Activated CD8-positive, alpha-beta memory T cell treated with anti-CD3 and anti-CD28 coated beads, Interleukin-2, amount 10 ng/mL, durations not matched to agents 7 days and 5 days (primary cell): ENCODE measurements at regions of chr12 and their contacts with region 1.

Region 1: DNA sequence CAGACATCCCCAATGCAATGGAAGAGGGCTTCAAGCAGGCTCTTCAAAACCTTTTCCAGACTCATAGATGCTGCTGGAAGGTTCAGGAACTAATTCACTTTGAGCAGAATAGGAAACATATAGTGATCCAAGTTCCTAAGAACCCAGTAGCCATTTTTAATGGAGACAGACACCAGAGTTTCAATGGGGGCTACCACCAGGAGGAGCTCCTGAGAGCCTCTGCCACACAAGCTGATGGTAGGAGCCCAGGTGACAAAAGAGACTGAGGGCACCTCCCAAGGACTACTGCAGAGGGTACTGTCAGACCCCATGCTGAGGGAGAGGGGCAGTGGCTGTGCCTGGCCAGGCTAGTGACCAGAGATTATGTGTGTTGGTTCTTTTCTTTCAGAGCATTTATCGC is 45.9 kb downstream of the IFNG start:
- DNase-seq: peak; percentile 72
- ATAC-seq: peak; percentile 54
- H3K4me3 Mint-ChIP-seq: no peak overlapping the region
- H3K27ac Mint-ChIP-seq: no peak overlapping the region
- H3K4me1 Mint-ChIP-seq: peaks cover 49% of the 10 kb centered on the region
- H3K27me3 Mint-ChIP-seq: no peaks in the 10 kb centered on the region

Region 2: DNA sequence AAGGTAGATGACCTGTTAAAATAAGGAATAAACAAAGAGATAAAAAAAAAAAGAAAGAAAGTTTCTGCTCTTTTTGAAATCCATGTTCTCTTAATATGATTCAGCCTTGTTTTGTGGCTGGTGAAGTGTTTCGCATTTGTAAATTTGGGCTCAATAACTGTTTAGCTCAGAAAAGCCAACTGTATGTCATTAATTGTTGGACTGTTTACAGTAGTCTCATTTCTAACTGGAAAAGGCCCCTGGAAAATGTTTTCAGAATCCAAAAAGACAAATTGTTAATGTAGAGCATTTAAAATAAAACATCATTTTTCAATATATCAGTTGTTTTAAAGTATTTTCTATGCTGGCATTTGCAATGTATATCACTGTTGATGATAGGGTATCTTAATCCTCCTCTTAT is 512.5 kb before region 1 on chr12:
- CTCF ChIA-PET with region 1: no interaction called
- DNase-seq: no peak
- ATAC-seq: no peak
- H3K4me3 Mint-ChIP-seq: no peak overlapping the region
- H3K27ac Mint-ChIP-seq: no peak overlapping the region
- H3K4me1 Mint-ChIP-seq: no peaks in the 10 kb centered on the region
- H3K27me3 Mint-ChIP-seq: no peaks in the 10 kb centered on the region

Region 3: GRCh38 chr12:68078737-68079136 is 34.9 kb before region 1 on chr12:
- CTCF ChIA-PET with region 1: interaction called, 12 read pairs
- DNase-seq: no peak
- ATAC-seq: no peak
- H3K4me3 Mint-ChIP-seq: no peak overlapping the region
- H3K27ac Mint-ChIP-seq: peak overlapping the region; percentile 62
- H3K4me1 Mint-ChIP-seq: peaks cover 48% of the 10 kb centered on the region
- H3K27me3 Mint-ChIP-seq: no peaks in the 10 kb centered on the region

Region 4: DNA sequence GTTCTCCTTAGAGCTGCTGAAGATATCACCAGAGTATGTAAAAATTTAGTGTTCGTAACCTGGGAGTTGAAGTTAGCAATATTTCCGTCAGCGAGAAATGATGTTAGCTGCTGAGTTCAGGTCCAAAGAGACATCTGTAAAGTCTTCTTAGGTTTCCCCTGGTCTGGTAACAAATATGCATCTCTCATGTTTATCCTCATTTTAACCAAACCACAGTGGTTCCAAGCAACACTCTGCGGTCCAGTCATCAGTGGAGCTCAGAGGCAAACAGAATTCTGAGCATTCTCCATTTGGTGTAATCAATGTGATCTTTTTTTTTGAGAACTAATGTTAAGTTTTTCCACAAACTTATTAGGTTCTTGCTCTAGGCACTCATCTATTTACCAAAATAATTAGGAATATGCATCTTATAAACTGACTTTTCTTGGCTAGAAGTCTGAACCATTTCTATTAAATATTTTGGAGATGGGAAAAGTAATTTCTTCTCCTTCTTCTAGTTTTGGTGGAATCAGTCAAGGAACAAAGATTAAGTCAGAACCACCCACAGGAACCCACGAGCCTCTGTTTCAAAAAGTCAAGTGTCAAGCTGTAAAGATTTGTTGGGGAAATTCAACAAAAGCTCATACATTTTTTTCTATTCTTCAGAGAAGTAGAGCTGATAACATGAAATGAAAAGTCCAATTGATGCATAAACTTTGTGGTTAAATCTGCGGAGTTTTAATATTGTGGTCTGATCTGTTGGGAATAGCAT is 18.8 kb before region 1 on chr12:
- CTCF ChIA-PET with region 1: interaction called, 10 read pairs
- DNase-seq: peak; percentile 57
- ATAC-seq: peak; percentile 64
- H3K4me3 Mint-ChIP-seq: no peak overlapping the region
- H3K27ac Mint-ChIP-seq: peak overlapping the region; percentile 73
- H3K4me1 Mint-ChIP-seq: peaks cover 30% of the 10 kb centered on the region
- H3K27me3 Mint-ChIP-seq: no peaks in the 10 kb centered on the region

Region 5: GRCh38 chr12:68137335-68137830 is 23.7 kb after region 1 on chr12:
- CTCF ChIA-PET with region 1: interaction called, 19 read pairs
- DNase-seq: no peak
- ATAC-seq: peak; percentile 62
- H3K4me3 Mint-ChIP-seq: peak overlapping the region; percentile 20
- H3K27ac Mint-ChIP-seq: peak overlapping the region; percentile 86
- H3K4me1 Mint-ChIP-seq: peaks cover 49% of the 10 kb centered on the region
- H3K27me3 Mint-ChIP-seq: no peaks in the 10 kb centered on the region